ENCODE measurements at regions of chr6 and their contacts with region 1.

Region 1: DNA sequence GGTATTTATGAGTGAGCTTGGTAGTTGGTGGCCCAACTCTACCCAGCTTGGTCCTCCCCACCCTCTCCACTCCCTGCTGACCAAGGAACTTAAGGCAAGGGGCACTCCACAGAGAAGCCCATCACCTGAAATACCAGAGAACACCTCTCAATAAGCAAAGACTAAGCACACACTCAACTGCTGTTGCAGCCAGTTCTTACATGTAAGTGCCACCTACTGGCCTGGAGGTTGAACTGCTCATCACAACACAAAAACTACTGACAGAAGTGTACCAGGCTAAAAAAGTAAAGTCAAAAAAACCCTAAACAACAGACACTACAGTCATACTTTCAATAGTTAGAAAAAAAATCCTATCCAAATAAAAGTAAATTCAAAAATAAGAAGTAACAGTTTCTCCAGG is 146.2 kb downstream of the FAM83B start:
- DNase-seq: peak; percentile 48
- ATAC-seq: peak; percentile 90
- H3K4me3 ChIP-seq: no peak overlapping the region
- H3K27ac ChIP-seq: no peak overlapping the region
- H3K4me1 ChIP-seq: no peaks in the 10 kb centered on the region
- H3K27me3 ChIP-seq: no peaks in the 10 kb centered on the region
- CTCF ChIP-seq: peak; percentile 75
- EP300 ChIP-seq: no peak
- POLR2A ChIP-seq: no peak
- RAD21 ChIP-seq: 0 out of 2 replicates have a peak, but pooled peaks have one; percentile 45

Region 2: DNA sequence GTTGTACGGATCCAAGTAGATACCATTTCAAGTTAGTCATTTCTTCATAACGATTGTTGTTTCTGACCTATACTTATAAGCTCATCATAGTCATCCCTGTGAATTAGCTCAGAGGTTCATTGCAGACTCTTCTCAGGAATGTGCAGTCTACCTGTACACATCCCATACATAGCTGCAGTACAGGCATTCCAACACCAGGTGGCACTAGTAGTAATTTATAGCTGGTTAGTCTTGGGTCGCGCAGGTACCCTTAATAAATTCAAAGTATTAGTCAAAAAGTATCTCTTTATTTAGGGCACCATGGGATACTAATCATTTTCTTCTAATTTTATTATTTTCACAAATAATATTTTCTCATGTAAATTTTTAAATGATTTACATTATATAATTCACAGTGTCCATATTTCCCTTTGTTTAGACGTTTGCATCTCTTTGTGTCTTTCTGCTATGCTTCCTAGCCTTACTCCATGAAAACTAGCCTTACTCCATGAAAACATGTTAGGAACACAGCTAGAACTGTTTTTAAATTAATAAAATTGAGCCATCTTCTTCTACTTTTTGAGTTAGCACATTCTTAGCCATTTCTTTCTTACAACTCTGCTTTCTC is 274.8 kb before region 1 on chr6:
- CTCF ChIA-PET with region 1: interaction called, 9 read pairs
- POLR2A ChIA-PET with region 1: no interaction called
- in situ Hi-C with region 1: no loop called
- intact Hi-C with region 1: loop called (anchors 1 kb)
- DNase-seq: peak; percentile 77
- ATAC-seq: peak; percentile 92
- H3K4me3 ChIP-seq: no peak overlapping the region
- H3K27ac ChIP-seq: no peak overlapping the region
- H3K4me1 ChIP-seq: no peaks in the 10 kb centered on the region
- H3K27me3 ChIP-seq: no peaks in the 10 kb centered on the region
- CTCF ChIP-seq: peak; percentile 76
- EP300 ChIP-seq: no peak
- POLR2A ChIP-seq: no peak
- RAD21 ChIP-seq: no peak; the same call in 1 of the 2 replicates

Region 3: DNA sequence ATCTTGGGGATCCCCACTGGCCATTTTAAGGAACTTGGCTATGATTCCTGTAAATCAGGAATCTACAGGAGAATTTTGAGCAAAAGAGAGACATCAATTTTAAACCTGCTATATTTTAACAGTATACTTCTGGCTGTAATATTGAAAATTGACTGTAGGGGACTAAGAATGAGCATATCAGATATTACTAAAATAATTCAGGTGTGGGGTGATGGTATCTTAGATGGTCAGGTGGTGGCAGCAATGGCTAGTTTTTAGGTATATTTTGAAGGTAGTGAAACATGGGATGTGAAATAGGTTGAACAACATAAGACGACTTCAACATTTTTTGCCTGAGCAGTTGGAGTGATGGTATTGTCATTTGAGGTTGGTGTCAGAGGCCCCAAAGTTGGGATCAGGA is 114.1 kb before region 1 on chr6:
- CTCF ChIA-PET with region 1: interaction called, 11 read pairs
- POLR2A ChIA-PET with region 1: no interaction called
- in situ Hi-C with region 1: no loop called
- intact Hi-C with region 1: loop called (anchors 1 kb)
- DNase-seq: peak; percentile 28
- ATAC-seq: peak; percentile 79
- H3K4me3 ChIP-seq: no peak overlapping the region
- H3K27ac ChIP-seq: no peak overlapping the region
- H3K4me1 ChIP-seq: no peaks in the 10 kb centered on the region
- H3K27me3 ChIP-seq: no peaks in the 10 kb centered on the region
- CTCF ChIP-seq: peak; percentile 55
- EP300 ChIP-seq: no peak
- POLR2A ChIP-seq: no peak
- RAD21 ChIP-seq: 0 out of 2 replicates have a peak, but pooled peaks have one; percentile 40

Region 4: DNA sequence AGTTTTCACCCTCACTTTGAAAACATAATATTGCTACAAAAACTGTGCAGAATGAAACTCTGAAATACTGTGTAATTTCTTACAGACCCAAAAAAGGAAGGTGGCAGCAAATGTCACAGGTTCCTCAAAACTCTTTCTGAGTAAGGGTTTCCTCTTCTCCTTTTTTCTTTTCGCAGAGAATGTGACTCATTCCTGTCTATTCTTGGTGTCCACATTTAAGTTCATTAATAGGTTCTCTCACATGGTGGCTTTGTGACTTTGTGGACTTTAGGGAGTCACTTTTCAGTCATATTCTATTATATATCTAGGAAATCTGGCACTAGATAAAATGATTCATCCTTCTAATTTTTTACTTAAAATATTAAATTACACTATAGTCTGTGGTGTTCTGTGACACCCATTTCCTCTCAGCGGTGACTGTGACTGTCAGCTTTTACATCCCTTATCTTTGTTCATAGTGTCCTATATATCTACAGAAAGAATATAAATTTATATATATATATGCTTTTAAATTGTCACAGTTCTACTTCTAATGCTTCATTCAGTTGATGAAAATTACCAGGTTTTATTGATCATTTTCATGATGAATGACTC is 54.8 kb after region 1 on chr6:
- CTCF ChIA-PET with region 1: no interaction called
- POLR2A ChIA-PET with region 1: no interaction called
- in situ Hi-C with region 1: no loop called
- intact Hi-C with region 1: no loop called
- DNase-seq: no peak
- ATAC-seq: no peak
- H3K4me3 ChIP-seq: no peak overlapping the region
- H3K27ac ChIP-seq: no peak overlapping the region
- H3K4me1 ChIP-seq: no peaks in the 10 kb centered on the region
- H3K27me3 ChIP-seq: no peaks in the 10 kb centered on the region
- CTCF ChIP-seq: no peak
- EP300 ChIP-seq: no peak
- POLR2A ChIP-seq: no peak
- RAD21 ChIP-seq: no peak